ENCODE measurements at regions of chr10 and their contacts with region 1.

Region 1: DNA sequence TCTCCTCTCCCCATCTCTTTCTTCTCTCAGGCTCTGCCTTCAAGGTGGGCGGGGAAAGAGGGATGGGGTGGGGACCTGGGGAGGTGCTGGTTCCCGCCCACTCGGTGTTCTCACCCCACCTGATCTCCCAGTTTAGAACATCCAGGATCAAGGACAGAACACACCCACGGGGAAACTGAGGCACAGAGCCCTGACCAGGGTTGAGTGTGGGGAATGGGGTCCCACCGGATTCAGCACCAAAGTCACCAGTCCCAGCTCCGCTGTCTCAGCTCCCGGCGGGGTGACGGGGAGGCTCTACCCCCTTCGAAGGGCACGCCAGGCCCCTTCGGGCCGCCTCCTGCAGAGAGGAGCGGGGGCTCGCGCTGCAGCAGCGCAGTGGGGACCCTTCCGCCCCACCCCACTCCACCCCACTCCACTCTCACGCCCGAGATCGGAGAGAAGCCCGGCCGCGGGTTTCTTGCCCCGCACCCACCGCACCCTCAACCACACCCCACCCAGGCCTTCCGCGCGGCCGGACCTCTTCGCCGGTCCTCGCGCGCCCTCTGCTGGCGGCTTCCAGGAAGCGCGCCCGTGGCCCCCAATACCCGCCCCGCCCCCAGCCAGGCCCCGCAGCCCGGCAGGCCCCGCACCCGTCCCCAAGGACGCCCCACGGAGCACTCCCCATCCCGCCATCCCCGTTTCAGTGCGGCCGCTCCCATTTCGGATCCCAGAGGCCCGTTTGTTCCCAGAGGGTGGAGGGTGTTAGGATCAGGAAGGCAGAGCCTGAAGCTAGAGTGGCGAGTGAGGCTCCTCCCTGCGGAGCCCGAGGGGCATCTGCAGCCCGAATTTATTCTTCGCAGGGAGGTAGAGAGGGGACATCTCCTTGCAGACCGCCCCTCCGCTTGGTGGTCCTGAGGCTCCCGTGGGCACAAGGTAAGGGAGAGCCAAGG is 18.0 kb downstream of the POLL start:
- DNase-seq: peak; percentile 81
- H3K4me3 Mint-ChIP-seq: peak overlapping the region; percentile 62
- H3K27ac Mint-ChIP-seq: no peak overlapping the region
- H3K4me1 Mint-ChIP-seq: peaks cover 15% of the 10 kb centered on the region
- H3K27me3 Mint-ChIP-seq: peaks cover 42% of the 10 kb centered on the region

Region 2: GRCh38 chr10:101161494-101162299 is 408.4 kb before region 1 on chr10:
- CTCF ChIA-PET with region 1: interaction called, 5 read pairs
- intact Hi-C with region 1: loop called (anchors 5 kb)
- DNase-seq: peak; percentile 87
- H3K4me3 Mint-ChIP-seq: peak overlapping the region; percentile 15
- H3K27ac Mint-ChIP-seq: no peak overlapping the region
- H3K4me1 Mint-ChIP-seq: peaks cover 13% of the 10 kb centered on the region
- H3K27me3 Mint-ChIP-seq: peaks cover 53% of the 10 kb centered on the region

Region 3: GRCh38 chr10:101272229-101272868 is 297.8 kb before region 1 on chr10:
- CTCF ChIA-PET with region 1: interaction called, 13 read pairs
- intact Hi-C with region 1: loop called (anchors 1 kb)
- DNase-seq: peak; percentile 73
- H3K4me3 Mint-ChIP-seq: no peak overlapping the region
- H3K27ac Mint-ChIP-seq: no peak overlapping the region
- H3K4me1 Mint-ChIP-seq: peaks cover 2% of the 10 kb centered on the region
- H3K27me3 Mint-ChIP-seq: peaks cover 20% of the 10 kb centered on the region

Region 4: GRCh38 chr10:101297901-101298486 is 272.1 kb before region 1 on chr10:
- CTCF ChIA-PET with region 1: interaction called, 9 read pairs
- intact Hi-C with region 1: loop called (anchors 1 kb)
- DNase-seq: peak; percentile 89
- H3K4me3 Mint-ChIP-seq: no peak overlapping the region
- H3K27ac Mint-ChIP-seq: no peak overlapping the region
- H3K4me1 Mint-ChIP-seq: peaks cover 1% of the 10 kb centered on the region
- H3K27me3 Mint-ChIP-seq: peaks cover 35% of the 10 kb centered on the region

Region 5: GRCh38 chr10:101429423-101429822 is 140.7 kb before region 1 on chr10:
- CTCF ChIA-PET with region 1: no interaction called
- intact Hi-C with region 1: no loop called
- DNase-seq: no peak
- H3K4me3 Mint-ChIP-seq: no peak overlapping the region
- H3K27ac Mint-ChIP-seq: no peak overlapping the region
- H3K4me1 Mint-ChIP-seq: peaks cover 3% of the 10 kb centered on the region
- H3K27me3 Mint-ChIP-seq: no peaks in the 10 kb centered on the region

Region 6: GRCh38 chr10:101536800-101537199 is 33.3 kb before region 1 on chr10:
- CTCF ChIA-PET with region 1: interaction called, 9 read pairs
- intact Hi-C with region 1: loop called (anchors 1 kb)
- DNase-seq: no peak
- H3K4me3 Mint-ChIP-seq: no peak overlapping the region
- H3K27ac Mint-ChIP-seq: no peak overlapping the region
- H3K4me1 Mint-ChIP-seq: no peaks in the 10 kb centered on the region
- H3K27me3 Mint-ChIP-seq: no peaks in the 10 kb centered on the region

Region 7: GRCh38 chr10:101587725-101588653 is 17.9 kb after region 1 on chr10 and contains the starts of genes DPCD and POLL:
- CTCF ChIA-PET with region 1: interaction called, 12 read pairs
- intact Hi-C with region 1: no loop called
- DNase-seq: peak; percentile 97
- H3K4me3 Mint-ChIP-seq: peak within 1 kb of the TSS; percentile 91
- H3K27ac Mint-ChIP-seq: peak within 1 kb of the TSS; percentile 78
- H3K4me1 Mint-ChIP-seq: peaks cover 21% of the 10 kb centered on the region
- H3K27me3 Mint-ChIP-seq: no peaks in the 10 kb centered on the region
- total RNA-seq, gene DPCD: 13.8 to 14.1 TPM
- total RNA-seq, gene POLL: 28.1 to 29.0 TPM